BJ (cell line): ENCODE measurements at regions of chr15 and their contacts with region 1.

Region 1: GRCh38 chr15:88894348-88894818 is 961 bp downstream of the HAPLN3 start:
- DNase-seq: no peak
- H3K4me3 ChIP-seq: peak overlapping the region; percentile 53; the same call in 1 of the 2 replicates
- H3K27me3 ChIP-seq: no peaks in the 10 kb centered on the region
- CTCF ChIP-seq: peak; percentile 57

Region 2: GRCh38 chr15:88878720-88879184 is 15.6 kb before region 1 on chr15:
- CTCF ChIA-PET with region 1: interaction called, 16 read pairs
- POLR2A ChIA-PET with region 1: no interaction called
- DNase-seq: no peak
- H3K4me3 ChIP-seq: no peak overlapping the region
- H3K27me3 ChIP-seq: no peaks in the 10 kb centered on the region
- CTCF ChIP-seq: peak; percentile 91

Region 3: DNA sequence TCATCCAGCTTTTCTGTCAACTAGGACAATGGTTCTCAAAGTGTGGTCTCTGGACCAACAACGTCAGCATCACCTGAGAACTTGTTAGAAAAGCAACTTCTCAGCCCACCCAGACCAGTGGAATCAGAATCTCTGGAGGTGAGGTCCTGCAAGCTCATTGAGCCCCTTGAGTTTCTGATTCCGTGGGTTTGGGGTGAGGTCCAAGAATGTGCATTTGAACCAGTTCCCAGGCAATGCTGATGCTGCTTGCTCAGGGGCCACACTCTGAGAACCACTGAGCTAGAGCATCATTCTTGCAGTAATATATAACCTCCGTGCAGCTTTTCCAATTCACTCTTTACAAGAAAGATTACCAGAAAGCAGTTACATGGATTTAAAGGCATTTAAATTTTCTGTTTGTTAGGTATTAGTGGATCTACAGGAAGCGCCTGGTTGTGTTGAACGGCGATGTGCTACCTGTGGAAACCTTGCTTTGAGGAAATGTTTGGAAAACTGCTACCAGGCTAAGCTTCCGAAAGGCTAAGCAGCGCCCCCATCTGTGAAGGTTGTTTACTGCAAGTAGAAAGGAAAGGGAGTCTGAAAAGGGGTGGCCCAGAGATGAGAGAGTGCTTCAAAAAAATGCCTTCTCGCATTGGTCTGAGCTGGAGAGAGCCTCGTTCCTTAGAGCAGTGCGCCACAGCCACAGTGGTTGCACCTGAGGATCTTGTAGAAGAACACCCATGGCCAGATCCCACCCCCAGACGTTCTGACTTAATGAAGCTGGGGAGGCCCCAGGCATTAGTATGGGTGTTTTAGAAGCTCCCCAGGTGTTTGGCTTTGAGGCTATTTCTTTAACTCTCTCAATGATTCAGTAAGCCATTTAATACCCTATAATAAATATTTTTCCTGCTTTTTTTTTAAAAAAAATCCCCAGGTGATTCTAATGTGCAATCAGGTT is 277.0 kb after region 1 on chr15:
- CTCF ChIA-PET with region 1: no interaction called
- POLR2A ChIA-PET with region 1: no interaction called
- DNase-seq: no peak
- H3K4me3 ChIP-seq: no peak overlapping the region
- H3K27me3 ChIP-seq: no peaks in the 10 kb centered on the region
- CTCF ChIP-seq: peak; percentile 71